CD8-positive, alpha-beta memory T cell (primary cell): ENCODE measurements at regions of chr9 and their contacts with region 1.

Region 1: DNA sequence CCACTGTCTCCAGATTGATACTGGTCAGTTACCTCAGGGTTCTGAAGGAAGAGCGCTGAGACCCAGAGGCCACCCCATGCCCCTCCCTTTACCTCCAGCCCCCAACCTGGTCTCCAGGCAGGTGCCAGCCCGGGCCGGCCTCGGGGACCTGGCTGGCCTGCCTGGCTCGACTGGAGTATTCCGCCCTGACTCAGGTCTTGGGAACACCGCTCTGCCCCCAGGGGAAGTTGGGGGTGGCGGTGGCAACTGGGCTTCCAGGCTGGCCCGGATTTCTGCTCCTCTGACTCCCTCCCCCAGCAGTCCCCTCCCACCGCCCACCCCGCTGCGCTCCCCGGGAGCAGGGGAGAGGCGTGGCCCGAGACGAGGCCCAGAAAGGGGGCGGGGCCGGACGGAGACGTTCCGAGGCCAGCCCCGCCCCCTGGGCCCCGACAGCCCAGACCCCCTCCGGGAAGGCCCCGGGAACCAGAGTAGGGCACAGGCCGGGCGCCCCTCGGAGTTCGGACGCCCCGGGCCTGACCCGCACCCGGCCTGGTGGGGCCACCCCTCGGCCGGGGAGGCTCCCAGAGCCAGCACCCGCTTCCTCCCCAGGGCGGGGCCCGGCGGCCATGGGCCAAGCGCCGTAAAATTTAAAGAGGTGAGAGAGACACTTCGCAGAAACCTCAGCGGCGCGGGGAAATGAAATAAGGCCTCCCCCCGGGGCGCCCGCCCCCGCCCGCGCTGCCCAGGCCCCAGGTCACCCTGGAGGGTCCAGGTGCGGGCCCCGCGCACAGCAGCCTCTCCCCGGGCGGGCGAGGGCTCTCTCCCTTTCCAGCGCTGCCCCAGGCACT is 82.4 kb upstream of the ZBTB43 start:
- DNase-seq: peak; percentile 83 to 93 (median 88)
- H3K4me3 ChIP-seq: peak overlapping the region; percentile 83
- H3K4me3 Mint-ChIP-seq: peak overlapping the region; percentile 84 to 91 (median 89)
- H3K27ac ChIP-seq: peak overlapping the region; percentile 96
- H3K27ac Mint-ChIP-seq: peak overlapping the region; percentile 95 to 100 (median 99)
- H3K4me1 ChIP-seq: peaks cover 44% of the 10 kb centered on the region
- H3K4me1 Mint-ChIP-seq: peaks cover 43 to 51% (median 47%) of the 10 kb centered on the region in 3 donors
- H3K27me3 ChIP-seq: no peaks in the 10 kb centered on the region
- H3K27me3 Mint-ChIP-seq: no peaks in the 10 kb centered on the region

Region 2: DNA sequence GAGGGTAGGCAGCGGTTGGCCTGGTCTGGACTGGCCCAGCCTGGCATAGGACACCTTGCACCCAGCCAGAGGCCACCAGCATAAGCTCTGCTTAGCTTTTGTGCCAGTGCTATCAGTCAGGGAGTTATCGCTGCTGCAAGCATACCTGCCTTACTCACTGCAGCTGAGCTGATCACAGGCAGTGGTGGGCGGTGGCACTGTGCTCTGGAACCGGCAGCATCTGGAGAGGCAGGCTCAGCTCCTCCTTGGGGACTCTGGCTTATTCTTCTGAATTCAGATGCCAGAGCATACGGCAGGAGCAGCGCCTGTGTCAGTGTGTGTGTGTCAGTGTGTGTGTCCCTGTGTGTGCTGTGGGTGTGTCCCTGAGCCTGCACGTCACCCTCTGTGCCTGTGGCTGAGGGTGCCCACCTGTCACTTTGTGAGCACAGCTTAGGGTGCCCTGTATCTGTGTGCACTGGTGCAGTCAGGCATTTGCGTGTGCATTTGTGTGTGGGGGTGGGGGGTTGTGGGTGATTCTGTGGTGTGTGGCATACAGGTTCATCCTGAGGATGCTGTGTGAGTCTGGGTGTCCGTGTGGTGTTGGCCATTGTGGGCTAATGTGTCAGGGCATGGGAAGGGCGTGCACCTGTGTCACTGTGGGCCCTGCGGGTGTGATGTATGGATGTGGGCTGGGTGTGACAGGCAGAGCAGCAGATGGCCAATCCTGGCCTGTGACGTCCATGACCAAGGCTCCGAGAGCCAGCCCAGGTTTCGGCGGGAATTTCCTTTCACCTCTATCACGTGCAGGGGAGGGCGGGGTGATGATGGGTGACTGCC is 85.3 kb before region 1 on chr9:
- CTCF ChIA-PET with region 1: no interaction called
- POLR2A ChIA-PET with region 1: no interaction called
- DNase-seq: peak in 4 of 5 donors; percentile 46 to 82 (median 63)
- H3K4me3 ChIP-seq: no peak overlapping the region
- H3K4me3 Mint-ChIP-seq: peak overlapping the region in 6 of 7 donors; percentile 5 to 90 (median 48)
- H3K27ac ChIP-seq: no peak overlapping the region
- H3K27ac Mint-ChIP-seq: peak overlapping the region; percentile 9 to 96 (median 78)
- H3K4me1 ChIP-seq: no peaks in the 10 kb centered on the region
- H3K4me1 Mint-ChIP-seq: peaks cover 12 to 19% (median 16%) of the 10 kb centered on the region in 3 donors
- H3K27me3 ChIP-seq: peaks cover 7% of the 10 kb centered on the region
- H3K27me3 Mint-ChIP-seq: peaks cover 39 to 67% of the 10 kb centered on the region in 2 donors

Region 3: DNA sequence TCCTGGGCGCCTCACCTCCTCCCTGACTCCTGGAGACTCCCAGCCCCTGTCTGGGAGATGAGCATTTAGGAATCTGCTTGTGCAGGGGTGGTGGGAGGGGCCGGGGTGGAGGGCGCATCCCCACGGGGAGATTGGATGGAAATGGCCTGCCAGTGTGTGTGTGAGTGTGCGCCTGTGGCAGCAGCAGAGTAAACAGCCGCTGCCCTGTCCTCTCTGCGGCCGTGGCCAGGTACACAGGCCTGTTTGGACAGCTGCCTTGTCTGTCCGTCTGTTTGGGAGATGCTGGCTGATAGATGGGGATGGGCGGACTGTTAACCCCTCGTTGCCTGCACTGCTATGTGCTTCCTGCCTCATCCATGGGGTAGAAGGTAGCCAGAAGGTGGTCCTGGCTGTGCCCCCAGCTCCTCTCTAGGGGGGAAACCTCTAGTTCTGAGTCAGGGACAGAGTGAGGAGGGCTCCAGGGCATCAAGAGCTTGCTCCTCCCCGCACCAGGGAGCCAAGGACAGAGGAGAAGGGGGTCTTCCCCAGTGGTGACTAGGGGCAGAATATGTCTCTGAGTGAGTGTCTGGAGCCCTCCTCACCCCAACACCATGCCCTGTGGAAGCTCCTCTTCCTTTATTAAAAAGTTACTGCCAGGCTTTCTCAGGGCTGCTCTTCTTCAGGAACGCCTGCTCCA is 48.6 kb before region 1 on chr9:
- CTCF ChIA-PET with region 1: no interaction called
- POLR2A ChIA-PET with region 1: no interaction called
- DNase-seq: no peak
- H3K4me3 ChIP-seq: no peak overlapping the region
- H3K4me3 Mint-ChIP-seq: no peak overlapping the region
- H3K27ac ChIP-seq: no peak overlapping the region
- H3K27ac Mint-ChIP-seq: no peak overlapping the region
- H3K4me1 ChIP-seq: no peaks in the 10 kb centered on the region
- H3K4me1 Mint-ChIP-seq: peaks cover 6 to 15% (median 8%) of the 10 kb centered on the region in 3 donors
- H3K27me3 ChIP-seq: peaks cover 15% of the 10 kb centered on the region
- H3K27me3 Mint-ChIP-seq: peaks cover 40 to 53% of the 10 kb centered on the region in 2 donors

Region 4: DNA sequence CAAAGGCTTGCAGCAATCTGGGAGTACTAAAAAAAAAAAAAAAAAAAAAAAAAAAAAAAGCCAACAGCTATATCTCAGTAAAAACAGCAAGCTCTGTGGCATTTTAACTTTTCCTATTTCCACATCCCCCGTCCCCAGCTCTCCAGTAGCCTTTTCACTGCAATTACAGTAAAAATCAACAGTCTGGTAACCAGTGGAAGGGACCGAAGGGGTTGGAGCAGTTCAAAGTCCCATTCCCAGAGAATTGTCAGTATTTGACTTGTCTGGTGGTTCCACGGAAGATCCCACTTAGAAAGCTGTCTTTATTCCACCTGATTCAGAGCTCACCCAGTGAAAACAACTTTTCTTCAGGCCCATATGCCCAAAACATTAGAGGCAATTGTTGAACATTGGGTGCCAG is 10.5 kb after region 1 on chr9:
- CTCF ChIA-PET with region 1: interaction called, 3 read pairs
- POLR2A ChIA-PET with region 1: interaction called, 11 read pairs
- DNase-seq: no peak
- H3K4me3 ChIP-seq: no peak overlapping the region
- H3K4me3 Mint-ChIP-seq: no peak overlapping the region
- H3K27ac ChIP-seq: no peak overlapping the region
- H3K27ac Mint-ChIP-seq: no peak overlapping the region
- H3K4me1 ChIP-seq: no peaks in the 10 kb centered on the region
- H3K4me1 Mint-ChIP-seq: no peaks in the 10 kb centered on the region
- H3K27me3 ChIP-seq: no peaks in the 10 kb centered on the region
- H3K27me3 Mint-ChIP-seq: peaks cover 6 to 13% of the 10 kb centered on the region in 2 donors